Motor neuron (in vitro differentiated cells): ENCODE measurements at regions of chr1 and their contacts with region 1.

Region 1: GRCh38 chr1:167066333-167067122 is 23.6 kb downstream of the GPA33 start:
- ATAC-seq: peak; percentile 84 to 99 (median 96)
- H3K4me3 ChIP-seq: peak overlapping the region; percentile 6 to 22 (median 9)
- H3K27ac ChIP-seq: no peak overlapping the region
- H3K4me1 ChIP-seq: peaks cover 0 to 2% of the 10 kb centered on the region in 2 donors

Region 2: GRCh38 chr1:165914136-165914798 is 1152.3 kb before region 1 on chr1:
- in situ Hi-C with region 1: loop called in 1 of 9 experiments (anchors 25 kb)
- ATAC-seq: peak; percentile 71 to 95 (median 86)
- H3K4me3 ChIP-seq: no peak overlapping the region
- H3K27ac ChIP-seq: no peak overlapping the region
- H3K4me1 ChIP-seq: no peaks in the 10 kb centered on the region

Region 3: GRCh38 chr1:167121375-167122120 is 55.0 kb after region 1 on chr1:
- in situ Hi-C with region 1: loop called in 1 of 9 experiments (anchors 10 kb)
- ATAC-seq: peak; percentile 52 to 93 (median 86)
- H3K4me3 ChIP-seq: peak overlapping the region in 3 of 5 donors; percentile 11 to 23 (median 17)
- H3K27ac ChIP-seq: no peak overlapping the region
- H3K4me1 ChIP-seq: no peaks in the 10 kb centered on the region

Region 4: DNA sequence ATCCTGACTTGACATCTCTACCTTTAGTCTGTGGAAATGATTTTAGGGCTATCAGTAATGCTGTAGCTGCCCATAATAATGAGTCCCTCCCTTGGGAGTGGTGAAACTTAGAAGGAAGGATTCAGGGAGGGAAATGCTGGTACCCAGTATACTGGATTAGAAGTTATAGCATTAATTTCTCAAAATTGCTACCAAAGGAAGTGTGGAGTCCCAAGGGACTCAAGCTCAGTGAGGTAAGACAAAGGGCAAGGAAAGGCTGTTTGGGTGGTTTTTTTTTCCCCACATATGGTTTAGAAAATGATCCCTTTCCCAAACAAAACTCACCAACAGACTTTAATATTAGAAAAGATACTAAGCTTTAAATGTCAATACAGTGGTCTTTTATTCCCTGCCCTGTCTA is 351.9 kb after region 1 on chr1:
- in situ Hi-C with region 1: no loop called
- ATAC-seq: peak in 2 of 8 experiments; percentile 20 to 50
- H3K4me3 ChIP-seq: no peak overlapping the region
- H3K27ac ChIP-seq: no peak overlapping the region
- H3K4me1 ChIP-seq: peaks cover 0 to 6% of the 10 kb centered on the region in 2 donors

Region 5: DNA sequence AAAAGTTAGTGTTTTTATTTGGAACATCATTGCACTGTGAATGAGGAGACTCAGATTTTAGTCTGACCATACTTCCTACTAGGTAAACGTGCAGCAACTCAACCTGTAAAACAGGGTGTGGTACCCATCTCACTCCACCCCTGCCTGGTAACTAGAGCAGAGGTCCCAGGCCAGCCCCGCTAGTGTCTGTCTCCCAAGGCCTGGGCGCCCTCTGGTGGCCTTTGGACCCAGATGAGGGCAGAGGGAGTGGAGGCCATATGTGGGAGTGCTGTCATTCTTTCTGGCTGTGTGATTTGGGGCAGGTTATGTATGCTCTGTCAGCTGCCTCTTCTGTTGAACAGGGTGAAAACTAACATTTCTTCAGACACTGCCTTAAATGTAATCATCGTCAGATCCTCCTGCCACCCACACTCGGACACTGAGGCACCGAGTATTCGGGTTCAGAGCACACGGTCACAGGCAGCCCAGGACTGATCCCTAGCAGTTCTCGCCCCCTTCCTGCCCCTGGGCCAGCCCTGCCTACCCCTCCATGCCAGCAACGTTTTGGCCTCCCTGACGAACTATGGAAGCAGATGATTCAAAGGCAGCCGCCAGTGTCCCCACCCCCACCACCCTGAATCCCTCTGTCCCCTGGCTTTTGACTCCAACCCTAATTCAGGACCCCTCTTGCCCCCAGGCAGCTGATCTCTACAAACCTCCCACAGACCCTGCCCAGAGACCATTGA is 375.8 kb after region 1 on chr1:
- in situ Hi-C with region 1: loop called in 2 of 9 experiments (anchors 25 kb)
- ATAC-seq: peak; percentile 77 to 96 (median 85)
- H3K4me3 ChIP-seq: no peak overlapping the region
- H3K27ac ChIP-seq: no peak overlapping the region
- H3K4me1 ChIP-seq: peaks cover 0 to 7% of the 10 kb centered on the region in 2 donors

Region 6: GRCh38 chr1:167553136-167554027 is 486.9 kb after region 1 on chr1 and contains the start of gene CREG1:
- in situ Hi-C with region 1: loop called in 4 of 9 experiments (anchors 10 to 25 kb)
- ATAC-seq: peak; percentile 95 to 99 (median 99)
- H3K4me3 ChIP-seq: peak within 1 kb of the TSS; percentile 63 to 83 (median 69)
- H3K27ac ChIP-seq: peak within 1 kb of the TSS; percentile 50 to 70
- H3K4me1 ChIP-seq: peaks cover 4 to 16% of the 10 kb centered on the region in 2 donors
- total RNA-seq, gene CREG1: 22.1 to 377 (median 44.7) TPM